Activated CD8-positive, alpha-beta T cell treated with anti-CD3 and anti-CD28 coated beads for 36 hours (primary cell): ENCODE measurements at regions of chrX and their contacts with region 1.

Region 1: GRCh38 chrX:65595460-65595876 is 60.9 kb upstream of the LAS1L start:
- DNase-seq: peak; percentile 99
- ATAC-seq: peak; percentile 88
- H3K4me3 Mint-ChIP-seq: peak overlapping the region; percentile 61
- H3K27ac Mint-ChIP-seq: peak overlapping the region; percentile 88
- H3K4me1 Mint-ChIP-seq: peaks cover 54% of the 10 kb centered on the region
- H3K27me3 Mint-ChIP-seq: no peaks in the 10 kb centered on the region
- CTCF ChIP-seq: peak; percentile 76

Region 2: DNA sequence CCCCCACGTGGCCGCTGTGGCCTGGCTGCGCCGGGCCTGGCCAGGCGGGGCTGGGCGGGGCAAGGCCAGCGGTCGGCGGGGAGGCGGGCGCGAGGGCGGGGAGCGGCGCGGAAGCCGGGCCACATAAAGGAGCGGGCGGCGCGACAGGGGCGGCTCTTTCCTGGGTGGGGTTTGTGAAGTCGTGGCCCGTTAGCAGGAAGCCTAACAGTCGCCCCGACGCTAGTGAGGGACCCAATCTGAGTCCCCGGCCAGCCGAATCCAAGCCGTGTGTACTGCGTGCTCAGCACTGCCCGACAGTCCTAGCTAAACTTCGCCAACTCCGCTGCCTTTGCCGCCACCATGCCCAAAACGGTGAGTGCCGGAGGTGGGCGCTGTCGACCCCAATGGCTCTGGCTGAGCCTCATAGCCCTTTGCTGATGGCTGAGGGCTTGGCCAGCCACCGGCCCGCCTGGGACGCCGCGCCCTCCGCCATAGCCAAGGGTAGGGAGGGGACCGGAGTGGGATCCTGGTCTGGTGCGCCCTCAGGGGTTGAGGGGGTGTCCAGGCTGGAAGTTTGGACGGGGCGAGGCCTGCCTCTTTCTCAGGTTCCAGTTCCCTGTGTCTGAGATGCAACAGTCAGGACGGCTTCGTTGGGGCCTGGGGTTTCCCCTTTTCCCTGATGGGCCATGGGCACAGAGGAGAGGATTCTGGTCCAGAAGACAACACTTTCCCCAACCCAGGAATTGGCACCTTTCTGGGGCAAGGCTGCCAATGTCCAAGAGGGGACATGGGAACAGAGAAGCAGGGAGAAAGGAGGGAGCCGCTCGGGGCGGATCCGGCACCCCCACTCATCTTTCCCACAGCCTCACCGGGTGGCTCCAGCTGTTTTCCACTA is 72.3 kb after region 1 on chrX and contains the start of gene MSN:
- CTCF ChIA-PET with region 1: interaction called, 4 read pairs
- POLR2A ChIA-PET with region 1: interaction called, 17 read pairs
- intact Hi-C with region 1: loop called (anchors 5 kb)
- DNase-seq: peak; percentile 81
- ATAC-seq: peak; percentile 74
- H3K4me3 Mint-ChIP-seq: peak within 1 kb of the TSS; percentile 95
- H3K27ac Mint-ChIP-seq: peak within 1 kb of the TSS; percentile 96
- H3K4me1 Mint-ChIP-seq: peaks cover 27% of the 10 kb centered on the region
- H3K27me3 Mint-ChIP-seq: no peaks in the 10 kb centered on the region
- CTCF ChIP-seq: no peak
- total RNA-seq, gene MSN: 426 to 435 TPM

Region 3: GRCh38 chrX:65674204-65674893 is 78.9 kb after region 1 on chrX:
- CTCF ChIA-PET with region 1: interaction called, 10 read pairs
- POLR2A ChIA-PET with region 1: interaction called, 17 read pairs
- intact Hi-C with region 1: loop called (anchors 5 kb)
- DNase-seq: peak; percentile 34
- ATAC-seq: peak; percentile 44
- H3K4me3 Mint-ChIP-seq: peak overlapping the region; percentile 95
- H3K27ac Mint-ChIP-seq: peak overlapping the region; percentile 94
- H3K4me1 Mint-ChIP-seq: peaks cover 61% of the 10 kb centered on the region
- H3K27me3 Mint-ChIP-seq: no peaks in the 10 kb centered on the region
- CTCF ChIP-seq: no peak

Region 4: DNA sequence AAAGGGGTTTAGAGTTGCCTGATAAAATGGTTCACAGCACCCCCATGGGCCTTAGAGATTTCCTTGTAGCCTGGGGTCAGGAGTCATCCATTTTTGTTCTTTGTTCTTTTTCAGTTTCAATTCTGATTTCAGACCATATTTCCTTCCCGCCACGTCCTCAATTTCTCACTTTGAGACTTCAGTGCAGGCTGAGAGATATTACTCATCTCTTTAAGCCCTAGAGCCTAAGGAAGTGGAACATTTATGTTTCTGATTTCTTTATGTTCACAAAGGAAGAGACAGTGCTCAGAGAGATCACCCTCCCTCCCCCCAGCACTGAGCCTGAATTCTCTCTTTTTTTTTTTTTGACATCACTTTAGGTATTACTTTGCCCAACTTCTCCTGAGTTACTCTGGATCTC is 128.2 kb after region 1 on chrX:
- CTCF ChIA-PET with region 1: interaction called, 9 read pairs
- POLR2A ChIA-PET with region 1: interaction called, 4 read pairs
- intact Hi-C with region 1: loop called (anchors 2 kb)
- DNase-seq: peak; percentile 63
- ATAC-seq: peak; percentile 88
- H3K4me3 Mint-ChIP-seq: peak overlapping the region; percentile 38
- H3K27ac Mint-ChIP-seq: peak overlapping the region; percentile 94
- H3K4me1 Mint-ChIP-seq: peaks cover 86% of the 10 kb centered on the region
- H3K27me3 Mint-ChIP-seq: no peaks in the 10 kb centered on the region
- CTCF ChIP-seq: no peak

Region 5: GRCh38 chrX:65985922-65986588 is 390.6 kb after region 1 on chrX:
- CTCF ChIA-PET with region 1: interaction called, 4 read pairs
- POLR2A ChIA-PET with region 1: no interaction called
- intact Hi-C with region 1: loop called (anchors 5 kb)
- DNase-seq: peak; percentile 71
- ATAC-seq: peak; percentile 100
- H3K4me3 Mint-ChIP-seq: no peak overlapping the region
- H3K27ac Mint-ChIP-seq: peak overlapping the region; percentile 83
- H3K4me1 Mint-ChIP-seq: peaks cover 23% of the 10 kb centered on the region
- H3K27me3 Mint-ChIP-seq: no peaks in the 10 kb centered on the region
- CTCF ChIP-seq: peak; percentile 32